Activated CD4-positive, alpha-beta memory T cell treated with anti-CD3 and anti-CD28 coated beads for 36 hours (primary cell): ENCODE measurements at regions of chr9 and their contacts with region 1.

Region 1: DNA sequence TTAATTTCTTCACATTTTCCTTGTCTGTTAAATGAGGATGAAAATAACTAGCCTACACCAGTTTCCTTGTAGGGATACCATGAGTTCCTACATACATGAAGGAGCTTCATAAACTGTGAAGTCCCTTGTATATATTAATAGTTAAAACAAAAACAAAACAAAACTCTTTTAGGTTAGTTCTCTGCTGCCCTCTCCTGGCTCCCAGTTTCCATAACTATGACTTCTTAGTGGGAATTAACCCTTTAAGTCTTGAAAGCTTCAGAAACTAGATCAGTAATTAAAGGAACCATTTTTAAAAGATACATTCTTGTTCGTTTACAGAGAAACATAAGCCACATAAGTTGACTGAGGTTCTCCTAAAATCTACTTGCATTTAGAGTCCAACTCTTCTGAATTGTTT is 500.0 kb upstream of the C9orf72 start:
- DNase-seq: no peak
- H3K4me3 Mint-ChIP-seq: no peak overlapping the region
- H3K27ac Mint-ChIP-seq: no peak overlapping the region
- H3K4me1 Mint-ChIP-seq: no peaks in the 10 kb centered on the region
- H3K27me3 Mint-ChIP-seq: no peaks in the 10 kb centered on the region

Region 2: GRCh38 chr9:27726244-27727081 is 346.8 kb before region 1 on chr9:
- CTCF ChIA-PET with region 1: no interaction called
- POLR2A ChIA-PET with region 1: no interaction called
- intact Hi-C with region 1: loop called (anchors 5 kb)
- DNase-seq: peak; percentile 56
- H3K4me3 Mint-ChIP-seq: no peak overlapping the region
- H3K27ac Mint-ChIP-seq: no peak overlapping the region
- H3K4me1 Mint-ChIP-seq: no peaks in the 10 kb centered on the region
- H3K27me3 Mint-ChIP-seq: peaks cover 12% of the 10 kb centered on the region